Activated CD4-positive, alpha-beta memory T cell treated with anti-CD3 and anti-CD28 coated beads for 36 hours (primary cell): ENCODE measurements at regions of chr4 and their contacts with region 1.

Region 1: GRCh38 chr4:150886599-150886998 is 128.5 kb downstream of the LRBA start:
- DNase-seq: no peak
- H3K4me3 Mint-ChIP-seq: no peak overlapping the region
- H3K27ac Mint-ChIP-seq: no peak overlapping the region
- H3K4me1 Mint-ChIP-seq: peaks cover 18% of the 10 kb centered on the region
- H3K27me3 Mint-ChIP-seq: no peaks in the 10 kb centered on the region

Region 2: GRCh38 chr4:150960818-150961217 is 74.2 kb after region 1 on chr4:
- CTCF ChIA-PET with region 1: no interaction called
- POLR2A ChIA-PET with region 1: no interaction called
- intact Hi-C with region 1: loop called (anchors 5 kb)
- DNase-seq: peak; percentile 81
- H3K4me3 Mint-ChIP-seq: no peak overlapping the region
- H3K27ac Mint-ChIP-seq: no peak overlapping the region
- H3K4me1 Mint-ChIP-seq: peaks cover 47% of the 10 kb centered on the region
- H3K27me3 Mint-ChIP-seq: no peaks in the 10 kb centered on the region

Region 3: DNA sequence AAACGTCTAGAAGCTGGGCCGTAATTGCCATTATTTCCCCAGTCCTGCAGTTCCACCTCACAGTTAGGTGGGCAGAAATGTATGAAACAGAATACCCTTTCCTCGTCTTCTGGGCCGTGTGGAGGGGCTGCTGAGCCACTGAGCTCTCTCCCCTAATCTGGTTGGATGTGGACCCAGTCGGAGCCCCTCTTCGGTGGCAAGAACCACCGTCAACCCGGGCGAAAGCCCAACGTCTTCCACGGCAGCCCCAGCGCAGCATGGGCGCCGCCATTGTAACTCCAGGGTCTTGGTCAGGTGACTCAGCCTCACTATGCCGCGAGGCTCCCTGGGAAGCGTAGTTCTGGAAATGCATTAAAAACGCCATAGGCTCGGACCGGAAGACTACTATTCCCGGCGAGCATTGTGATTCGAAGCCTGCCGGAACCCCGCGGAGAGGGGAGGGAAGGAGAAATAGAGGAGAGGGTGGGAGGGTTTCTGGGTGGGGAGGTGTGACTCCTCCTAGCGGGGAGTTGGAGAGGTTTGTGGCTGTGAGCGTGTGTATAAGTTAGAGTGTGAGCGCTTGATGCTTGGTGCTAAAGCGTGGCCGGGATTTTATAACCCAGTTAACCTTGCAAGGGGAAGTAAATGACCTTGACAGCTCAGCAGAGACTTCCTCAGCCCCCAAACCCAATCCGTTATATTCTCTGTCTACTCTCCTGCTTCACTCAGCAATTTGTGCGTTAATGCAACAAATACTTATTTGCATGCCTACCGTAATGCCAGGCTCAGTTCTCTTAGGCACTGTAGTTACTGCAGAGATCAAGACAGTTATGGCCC is 874.3 kb after region 1 on chr4 and contains the start of gene GATB:
- CTCF ChIA-PET with region 1: no interaction called
- POLR2A ChIA-PET with region 1: no interaction called
- intact Hi-C with region 1: no loop called
- DNase-seq: peak; percentile 95
- H3K4me3 Mint-ChIP-seq: peak within 1 kb of the TSS; percentile 91
- H3K27ac Mint-ChIP-seq: peak within 1 kb of the TSS; percentile 64
- H3K4me1 Mint-ChIP-seq: peaks cover 13% of the 10 kb centered on the region
- H3K27me3 Mint-ChIP-seq: no peaks in the 10 kb centered on the region
- total RNA-seq, gene GATB: 16.1 to 16.5 TPM